ENCODE measurements at regions of chr3 and their contacts with region 1.

Region 1: DNA sequence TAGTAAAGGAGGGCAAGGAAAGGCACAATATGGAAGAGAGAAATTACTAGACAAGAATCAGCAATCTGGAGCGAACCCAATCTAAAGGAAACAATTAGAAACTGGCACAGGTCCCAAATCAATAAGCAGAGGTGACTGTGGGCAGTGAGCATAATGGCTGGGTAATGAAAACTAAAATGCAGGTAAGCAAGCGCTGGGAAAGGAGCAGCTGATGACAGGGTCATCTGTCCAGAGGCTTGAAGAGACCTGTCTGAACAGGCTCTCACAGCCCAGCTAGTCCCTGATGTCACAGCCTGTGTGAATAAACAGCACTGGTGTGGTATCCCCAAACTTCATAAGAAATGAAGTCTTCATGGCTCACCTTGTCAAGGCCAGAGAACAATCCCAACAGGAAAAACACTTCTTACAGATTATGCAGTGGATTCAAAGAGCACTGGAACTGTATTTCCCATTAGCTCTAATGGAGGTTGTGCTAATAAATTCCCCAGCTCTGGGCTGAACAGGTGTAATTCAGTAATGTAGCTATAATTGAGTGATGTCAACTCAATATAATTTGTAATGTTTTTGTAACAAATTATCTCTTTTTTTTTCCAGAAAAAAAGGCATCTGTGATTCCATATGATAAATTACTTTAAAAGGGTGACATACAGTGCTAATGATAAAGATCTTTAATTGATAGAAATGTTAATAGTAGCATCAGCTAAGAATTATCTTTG is 197.3 kb downstream of the FHIT start:
- DNase-seq: no peak
- ATAC-seq: no peak

Region 2: DNA sequence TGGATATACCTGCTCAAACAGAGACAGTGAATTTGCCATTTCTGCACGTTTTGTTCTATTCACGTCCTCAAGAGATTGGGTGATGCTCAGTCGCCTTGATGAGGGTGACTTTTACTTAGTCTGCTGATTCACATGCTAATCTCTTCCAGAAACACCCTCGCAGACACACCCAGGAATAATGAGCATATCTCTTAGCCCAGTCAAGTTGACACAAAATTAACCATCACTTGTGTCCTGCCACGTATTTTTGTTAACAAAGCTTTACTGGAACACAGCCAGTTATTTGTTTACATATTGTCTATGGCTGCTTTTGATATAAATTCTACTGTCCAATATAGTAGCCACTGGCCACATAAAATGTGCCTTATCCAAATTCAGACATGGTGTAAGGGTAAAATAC is 20.9 kb before region 1 on chr3:
- intact Hi-C with region 1: loop called (anchors 1 kb)
- DNase-seq: no peak
- ATAC-seq: no peak

Region 3: DNA sequence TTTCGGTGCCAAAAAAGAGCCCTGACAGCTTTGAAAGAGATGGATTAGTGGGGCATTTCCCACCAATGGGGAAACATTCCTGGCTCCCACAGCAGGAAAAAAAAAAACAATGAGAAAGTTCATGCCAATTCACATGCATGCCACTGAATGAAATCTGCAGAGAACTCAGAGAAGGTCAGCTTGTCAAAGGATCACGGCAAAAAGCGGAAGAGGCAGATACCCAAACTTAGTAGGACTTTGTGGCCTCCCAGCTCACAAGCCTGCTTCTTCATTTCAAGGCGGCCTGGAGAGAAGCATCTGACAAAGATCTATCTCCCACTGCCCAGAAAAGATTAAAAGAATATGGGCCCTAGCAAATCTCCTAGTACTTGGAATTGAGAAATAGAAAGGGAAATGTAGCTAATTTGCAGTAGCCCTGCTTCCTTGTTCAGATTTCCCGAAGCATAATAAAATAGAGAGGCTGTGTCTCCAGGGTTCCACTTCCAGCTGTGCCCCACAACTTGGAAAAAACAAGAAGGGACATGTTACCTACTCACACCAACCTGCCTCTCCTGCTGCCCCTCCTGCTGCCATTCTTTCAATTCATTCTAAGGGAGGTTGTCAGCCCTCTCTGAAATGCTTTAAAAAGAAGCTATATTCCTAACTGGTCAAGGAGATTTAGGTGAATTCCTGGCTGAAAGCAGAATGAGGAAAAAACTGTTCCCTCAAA is 27.0 kb after region 1 on chr3:
- intact Hi-C with region 1: no loop called
- DNase-seq: no peak
- ATAC-seq: no peak

Measured in sciatic nerve (tissue), 2 donors.